PC-9 (cell line): ENCODE measurements at regions of chr11 and their contacts with region 1.

Region 1: GRCh38 chr11:44592125-44592940 is 26.9 kb downstream of the CD82 start:
- DNase-seq: no peak
- H3K4me3 ChIP-seq: no peak overlapping the region
- H3K27ac ChIP-seq: no peak overlapping the region
- H3K4me1 ChIP-seq: no peaks in the 10 kb centered on the region
- H3K27me3 ChIP-seq: no peaks in the 10 kb centered on the region
- CTCF ChIP-seq: no peak

Region 2: GRCh38 chr11:43664295-43664694 is 928.0 kb before region 1 on chr11:
- CTCF ChIA-PET with region 1: no interaction called
- POLR2A ChIA-PET with region 1: no interaction called
- intact Hi-C with region 1: no loop called
- DNase-seq: no peak
- H3K4me3 ChIP-seq: no peak overlapping the region
- H3K27ac ChIP-seq: no peak overlapping the region
- H3K4me1 ChIP-seq: no peaks in the 10 kb centered on the region
- H3K27me3 ChIP-seq: peaks cover 19% of the 10 kb centered on the region
- CTCF ChIP-seq: no peak

Region 3: GRCh38 chr11:44565211-44565952 is 27.0 kb before region 1 on chr11 and contains the start of gene CD82:
- CTCF ChIA-PET with region 1: no interaction called
- POLR2A ChIA-PET with region 1: interaction called, 10 read pairs
- intact Hi-C with region 1: no loop called
- DNase-seq: peak; percentile 93 to 100
- H3K4me3 ChIP-seq: peak within 1 kb of the TSS; percentile 58
- H3K27ac ChIP-seq: peak within 1 kb of the TSS; percentile 75
- H3K4me1 ChIP-seq: peaks cover 14% of the 10 kb centered on the region
- H3K27me3 ChIP-seq: no peaks in the 10 kb centered on the region
- CTCF ChIP-seq: peak; percentile 46; the same call in 1 of the 2 replicates
- total RNA-seq, gene CD82: 30.7 and 46.0 TPM in 2 replicates

Region 4: DNA sequence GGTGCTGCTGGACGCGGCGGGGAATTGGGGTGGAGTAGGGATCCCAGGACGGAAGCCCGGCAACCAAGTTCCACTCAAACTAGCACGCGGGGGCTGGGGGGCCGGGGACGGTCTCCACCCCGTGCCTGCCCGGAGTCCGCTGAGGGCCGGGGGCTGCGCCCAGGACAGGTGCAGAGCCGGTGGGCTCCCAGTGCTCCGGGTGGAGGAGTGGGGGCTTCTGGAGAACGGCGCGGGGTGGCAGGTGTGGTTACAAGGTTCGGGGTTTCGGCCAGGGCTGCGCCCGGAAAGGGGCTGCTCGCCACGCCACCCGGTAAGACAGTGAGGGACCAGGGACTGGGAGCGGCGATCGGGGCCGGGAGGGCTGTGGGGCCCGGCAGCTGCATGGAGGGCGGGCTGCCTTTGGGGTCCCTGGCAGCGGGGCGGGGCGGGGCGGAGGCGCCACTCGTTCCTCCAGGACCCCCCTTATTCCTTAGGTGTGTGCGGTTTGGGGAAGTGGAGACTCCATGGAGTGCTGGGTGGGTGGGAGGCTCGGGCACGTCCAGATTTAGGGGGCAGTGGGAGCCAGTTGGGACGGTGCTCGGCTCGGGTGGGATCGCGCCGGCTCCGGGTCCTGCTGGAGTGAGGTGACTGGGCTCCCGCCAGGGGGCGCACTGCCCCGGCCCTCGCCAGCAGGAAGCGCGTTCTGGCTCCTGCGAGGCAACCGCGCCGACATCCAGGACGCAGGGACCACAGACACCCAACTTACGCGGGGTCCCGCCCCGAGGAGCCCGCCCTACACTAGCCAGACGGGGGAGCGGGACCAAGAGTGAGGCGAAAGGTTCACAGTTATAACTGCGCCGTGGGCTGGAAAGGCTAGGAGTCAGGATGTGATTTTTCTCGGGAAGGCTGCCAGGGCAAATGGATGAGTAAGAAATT is 135.3 kb after region 1 on chr11:
- CTCF ChIA-PET with region 1: no interaction called
- POLR2A ChIA-PET with region 1: no interaction called
- intact Hi-C with region 1: no loop called
- DNase-seq: peak in 1 of 2 experiments; percentile 58
- H3K4me3 ChIP-seq: no peak overlapping the region
- H3K27ac ChIP-seq: no peak overlapping the region
- H3K4me1 ChIP-seq: no peaks in the 10 kb centered on the region
- H3K27me3 ChIP-seq: peaks cover 16% of the 10 kb centered on the region; the same call in 1 of the 2 replicates
- CTCF ChIP-seq: peak; percentile 87

Region 5: DNA sequence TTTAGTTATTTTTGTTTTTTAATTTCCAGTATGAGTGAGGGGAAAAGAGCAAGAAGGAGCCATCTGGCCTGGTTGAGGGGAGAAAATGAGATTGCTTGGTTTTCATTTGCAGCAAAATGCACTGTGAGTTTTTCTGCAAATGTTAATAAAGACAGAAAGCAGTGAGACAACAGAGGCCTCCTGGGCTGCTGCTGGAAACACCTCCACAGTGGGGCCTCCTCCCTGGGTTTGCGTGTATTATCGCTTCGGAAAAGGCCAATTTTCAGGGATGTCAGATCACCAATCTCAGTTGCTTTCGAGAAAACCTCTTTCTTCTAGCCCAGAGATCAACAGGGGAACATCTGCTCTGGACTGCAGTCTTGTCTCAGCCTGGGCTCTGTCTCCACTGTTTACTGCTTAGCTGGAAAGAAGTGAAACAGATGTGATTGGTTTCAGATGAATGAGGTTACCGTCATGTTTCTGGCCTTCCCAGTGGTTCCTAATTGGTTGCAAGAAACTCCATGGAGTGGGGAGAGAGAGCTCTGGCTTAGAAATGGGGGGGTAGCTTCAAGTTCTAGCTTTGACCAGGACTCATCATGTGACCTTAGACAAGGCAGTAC is 151.7 kb after region 1 on chr11:
- CTCF ChIA-PET with region 1: no interaction called
- POLR2A ChIA-PET with region 1: no interaction called
- intact Hi-C with region 1: no loop called
- DNase-seq: no peak
- H3K4me3 ChIP-seq: no peak overlapping the region
- H3K27ac ChIP-seq: no peak overlapping the region
- H3K4me1 ChIP-seq: no peaks in the 10 kb centered on the region
- H3K27me3 ChIP-seq: peaks cover 62% of the 10 kb centered on the region
- CTCF ChIP-seq: no peak